Endothelial cell of umbilical vein (primary cell): ENCODE measurements at regions of chr6 and their contacts with region 1.

Region 1: DNA sequence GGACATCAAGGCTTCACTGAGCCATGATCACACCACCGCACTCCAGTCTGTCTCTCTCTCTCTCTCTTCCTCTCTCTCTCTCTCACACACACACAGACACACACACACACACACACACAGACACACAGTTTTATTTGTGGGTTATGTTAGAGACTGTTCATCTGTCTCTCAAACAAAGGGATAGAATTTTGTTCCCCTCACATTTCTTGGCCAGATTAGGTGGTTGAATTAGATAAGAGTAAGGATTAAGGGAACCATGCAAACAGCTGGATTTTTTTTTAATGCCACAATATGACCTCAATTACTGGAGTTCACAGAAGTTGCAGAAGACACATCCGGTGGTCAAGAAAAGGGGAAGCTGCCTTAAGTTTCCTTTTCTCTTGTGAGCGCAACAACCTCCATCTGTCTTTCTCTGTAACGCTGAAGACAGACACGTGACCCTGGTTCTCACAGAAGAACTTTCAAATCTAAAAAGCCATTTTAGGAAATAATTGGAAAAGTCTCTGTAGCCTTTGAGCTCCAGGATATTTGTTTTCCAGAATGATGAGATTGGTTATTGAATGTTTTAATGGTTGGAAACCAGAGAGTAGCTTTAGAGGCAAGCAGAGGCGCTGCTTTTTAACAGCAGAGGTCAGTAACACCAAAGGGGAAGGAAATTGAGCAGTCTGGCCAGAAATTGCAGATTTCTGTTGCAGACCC is 33.0 kb upstream of the LGSN start:
- DNase-seq: peak; percentile 27
- H3K4me3 ChIP-seq: no peak overlapping the region
- H3K27ac ChIP-seq: no peak overlapping the region
- H3K4me1 ChIP-seq: peaks cover 26% of the 10 kb centered on the region
- H3K27me3 ChIP-seq: no peaks in the 10 kb centered on the region
- CTCF ChIP-seq: peak in 1 of 2 donors; percentile 17
- POLR2A ChIP-seq: no peak

Region 2: GRCh38 chr6:63389191-63389844 is 36.6 kb after region 1 on chr6:
- CTCF ChIA-PET with region 1: no interaction called
- POLR2A ChIA-PET with region 1: no interaction called
- dilution Hi-C with region 1: no loop called
- intact Hi-C with region 1: no loop called
- DNase-seq: no peak
- H3K4me3 ChIP-seq: no peak overlapping the region
- H3K27ac ChIP-seq: no peak overlapping the region
- H3K4me1 ChIP-seq: no peaks in the 10 kb centered on the region
- H3K27me3 ChIP-seq: no peaks in the 10 kb centered on the region
- CTCF ChIP-seq: no peak
- POLR2A ChIP-seq: no peak

Region 3: GRCh38 chr6:63571881-63572732 is 219.4 kb after region 1 on chr6 and contains the starts of genes LOC128125822 and PTP4A1:
- CTCF ChIA-PET with region 1: interaction called, 6 read pairs
- POLR2A ChIA-PET with region 1: no interaction called
- dilution Hi-C with region 1: no loop called
- intact Hi-C with region 1: loop called (anchors 1 kb)
- DNase-seq: peak; percentile 97
- H3K4me3 ChIP-seq: peak within 1 kb of the TSS; percentile 13 to 96 (median 88)
- H3K27ac ChIP-seq: peak within 1 kb of the TSS; percentile 61
- H3K4me1 ChIP-seq: peaks cover 18% of the 10 kb centered on the region
- H3K27me3 ChIP-seq: peaks cover 8 to 10% of the 10 kb centered on the region in 2 experiments
- CTCF ChIP-seq: no peak
- POLR2A ChIP-seq: peak; percentile 87
- total RNA-seq, gene PTP4A1: 58.4 and 65.1 TPM in 2 replicates

Region 4: DNA sequence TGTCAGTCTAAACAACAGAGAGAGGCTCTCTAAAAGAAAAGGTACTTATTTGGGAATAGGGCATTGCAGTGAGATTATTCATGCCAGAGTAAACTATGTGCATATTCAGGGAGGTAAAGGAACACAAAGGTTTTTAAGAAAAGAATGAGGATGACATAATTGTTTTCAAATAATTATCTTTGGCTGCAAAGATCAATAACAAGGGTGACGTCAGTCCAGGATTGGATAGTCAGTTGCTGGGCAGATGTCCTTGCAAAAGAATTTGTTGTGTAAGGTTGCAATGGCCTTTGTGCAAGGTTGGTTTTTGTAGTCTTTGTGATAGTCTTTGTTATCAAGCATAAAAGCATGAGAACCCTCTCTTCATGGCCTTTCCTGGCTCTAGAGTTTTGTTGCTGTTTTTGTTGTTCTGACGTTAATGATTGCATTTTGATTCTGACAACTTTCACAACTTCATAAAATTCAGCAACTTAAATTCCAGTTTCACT is 237.2 kb after region 1 on chr6:
- CTCF ChIA-PET with region 1: no interaction called
- POLR2A ChIA-PET with region 1: no interaction called
- dilution Hi-C with region 1: no loop called
- intact Hi-C with region 1: no loop called
- DNase-seq: no peak
- H3K4me3 ChIP-seq: no peak overlapping the region
- H3K27ac ChIP-seq: no peak overlapping the region
- H3K4me1 ChIP-seq: no peaks in the 10 kb centered on the region
- H3K27me3 ChIP-seq: no peaks in the 10 kb centered on the region
- CTCF ChIP-seq: no peak
- POLR2A ChIP-seq: no peak

Region 5: GRCh38 chr6:63816982-63817436 is 464.3 kb after region 1 on chr6:
- CTCF ChIA-PET with region 1: interaction called, 18 read pairs
- POLR2A ChIA-PET with region 1: no interaction called
- dilution Hi-C with region 1: no loop called
- intact Hi-C with region 1: no loop called
- DNase-seq: no peak
- H3K4me3 ChIP-seq: no peak overlapping the region
- H3K27ac ChIP-seq: no peak overlapping the region
- H3K4me1 ChIP-seq: no peaks in the 10 kb centered on the region
- H3K27me3 ChIP-seq: peaks cover 0 to 3% of the 10 kb centered on the region in 2 experiments
- CTCF ChIP-seq: peak in 1 of 2 donors; percentile 11
- POLR2A ChIP-seq: no peak